Left ventricle myocardium inferior (tissue), 1 donor: ENCODE measurements at regions of chr5 and their contacts with region 1.

Region 1: DNA sequence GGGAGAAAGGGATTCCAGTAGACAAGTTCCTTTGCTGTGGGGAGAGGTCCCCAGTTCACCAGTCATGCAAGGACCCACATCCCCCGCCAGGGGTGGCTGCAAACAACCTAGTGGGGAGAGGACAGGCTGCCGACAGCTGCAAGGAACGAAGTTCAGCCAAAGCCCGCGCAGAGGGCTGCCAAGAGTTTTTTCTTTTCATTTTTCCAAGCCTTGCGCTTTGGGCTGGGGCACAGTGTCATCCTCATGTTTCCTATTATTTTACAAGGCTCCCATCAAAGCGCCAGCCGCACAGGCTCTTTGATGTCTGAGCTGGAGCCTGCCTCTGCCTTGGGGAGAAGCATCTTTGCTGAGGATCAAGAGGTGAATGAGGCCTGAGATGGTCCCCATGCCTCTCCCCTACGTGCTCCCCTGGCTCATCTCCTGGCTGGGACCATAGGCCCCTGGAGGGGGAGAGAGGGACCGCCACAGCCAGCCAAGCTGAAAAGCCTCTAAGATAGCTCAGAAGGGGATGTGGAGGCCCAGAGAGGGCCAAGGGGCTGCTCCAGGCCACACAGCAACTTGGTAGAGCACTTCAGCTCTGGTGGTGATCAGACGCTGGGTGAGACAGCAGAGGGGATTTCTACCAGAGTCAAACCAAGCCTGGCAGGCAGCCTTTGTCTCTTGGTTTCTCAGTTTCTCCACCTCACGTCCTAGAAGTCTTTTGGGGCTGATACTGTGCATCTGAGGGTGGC is 50.4 kb upstream of the SYNPO start:
- DNase-seq: peak; percentile 78
- H3K4me3 ChIP-seq: no peak overlapping the region
- H3K27ac ChIP-seq: peak overlapping the region; percentile 72
- H3K4me1 ChIP-seq: peaks cover 60% of the 10 kb centered on the region
- H3K27me3 ChIP-seq: no peaks in the 10 kb centered on the region
- CTCF ChIP-seq: peak; percentile 86

Region 2: DNA sequence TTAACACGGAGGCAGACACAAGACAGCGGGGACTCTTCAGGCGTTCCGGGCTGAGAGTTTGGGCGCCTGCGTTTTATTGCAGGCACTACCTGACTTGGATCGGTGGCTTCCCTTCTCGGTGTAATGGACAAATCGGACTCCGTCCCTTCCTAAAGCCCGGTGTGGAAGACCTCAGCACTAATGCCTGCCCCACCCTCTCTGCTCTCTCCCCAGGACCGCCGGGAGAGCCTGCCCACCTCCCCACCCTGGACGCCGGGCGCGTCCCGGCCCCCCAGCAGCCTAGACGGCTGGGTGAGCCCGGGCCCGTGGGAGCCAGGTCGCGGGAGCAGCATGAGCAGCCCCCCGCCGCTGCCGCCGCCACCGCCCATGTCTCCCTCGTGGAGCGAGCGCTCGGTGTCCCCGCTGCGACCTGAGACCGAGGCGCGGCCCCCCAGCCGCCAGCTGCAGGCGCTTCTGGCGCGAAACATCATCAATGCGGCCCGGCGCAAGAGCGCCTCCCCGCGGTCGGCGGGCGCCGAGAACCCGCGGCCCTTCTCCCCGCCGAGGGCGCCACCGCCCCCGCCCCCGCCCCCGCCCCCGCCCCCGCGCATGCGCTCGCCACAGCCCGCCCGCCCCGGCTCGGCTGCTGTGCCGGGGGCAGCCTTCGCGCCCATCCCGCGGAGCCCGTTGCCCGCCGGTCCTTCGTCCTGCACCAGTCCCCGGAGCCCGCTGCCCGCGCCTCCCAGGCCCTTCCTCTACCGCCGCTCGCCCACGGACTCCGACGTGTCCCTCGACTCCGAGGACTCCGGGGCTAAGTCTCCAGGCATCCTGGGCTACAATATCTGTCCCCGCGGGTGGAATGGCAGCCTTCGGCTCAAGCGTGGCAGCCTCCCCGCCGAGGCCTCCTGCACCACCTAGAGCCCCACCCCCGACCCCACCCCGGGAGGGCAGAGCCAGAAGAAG is 66.4 kb after region 1 on chr5:
- intact Hi-C with region 1: loop called (anchors 5 kb)
- DNase-seq: peak; percentile 77
- H3K4me3 ChIP-seq: peak overlapping the region; percentile 71
- H3K27ac ChIP-seq: peak overlapping the region; percentile 94
- H3K4me1 ChIP-seq: peaks cover 84% of the 10 kb centered on the region
- H3K27me3 ChIP-seq: no peaks in the 10 kb centered on the region
- CTCF ChIP-seq: peak; percentile 81